ENCODE measurements at regions of chr14 and their contacts with region 1.

Region 1: DNA sequence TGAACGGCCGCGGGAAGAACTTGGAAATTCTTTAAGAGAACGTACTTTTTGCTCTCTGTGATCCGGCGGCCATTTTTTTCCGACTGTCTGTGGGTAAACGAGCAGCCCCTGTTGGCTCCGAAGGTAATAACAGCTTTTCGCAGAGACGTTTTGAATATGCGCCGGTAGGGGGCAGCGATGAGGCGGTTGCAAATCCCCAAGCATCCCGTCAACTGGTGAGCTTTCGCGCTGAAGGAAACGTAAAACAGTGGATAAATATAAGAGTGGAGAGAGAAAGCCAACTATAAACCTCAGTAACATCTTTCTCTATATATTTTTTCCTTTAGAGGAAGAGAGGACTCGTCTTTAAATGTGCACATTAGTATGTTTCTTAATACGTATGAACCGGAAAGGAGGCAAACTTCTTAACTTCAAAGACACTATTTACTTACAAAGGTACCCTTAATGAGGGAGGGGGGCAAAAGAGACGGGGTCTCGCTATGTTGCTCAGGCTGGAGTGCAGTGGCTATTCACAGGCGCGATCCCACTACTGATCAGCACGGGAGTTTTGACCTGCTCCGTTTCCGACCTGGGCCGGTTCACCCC is 9.6 kb upstream of the NEMF start:
- DNase-seq: peak; percentile 86
- ATAC-seq: peak; percentile 9
- H3K4me3 Mint-ChIP-seq: no peak overlapping the region
- H3K27ac Mint-ChIP-seq: no peak overlapping the region
- H3K4me1 Mint-ChIP-seq: peaks cover 22% of the 10 kb centered on the region
- H3K27me3 Mint-ChIP-seq: no peaks in the 10 kb centered on the region

Region 2: GRCh38 chr14:49767562-49768300 is 94.5 kb before region 1 on chr14 and contains the start of gene KLHDC2:
- POLR2A ChIA-PET with region 1: interaction called, 17 read pairs
- DNase-seq: peak; percentile 93
- ATAC-seq: peak; percentile 88
- H3K4me3 Mint-ChIP-seq: peak within 1 kb of the TSS; percentile 98
- H3K27ac Mint-ChIP-seq: peak within 1 kb of the TSS; percentile 100
- H3K4me1 Mint-ChIP-seq: peaks cover 26% of the 10 kb centered on the region
- H3K27me3 Mint-ChIP-seq: no peaks in the 10 kb centered on the region
- total RNA-seq, gene KLHDC2: 43.6 to 44.1 TPM

Region 3: GRCh38 chr14:49786315-49787110 is 75.7 kb before region 1 on chr14:
- POLR2A ChIA-PET with region 1: no interaction called
- DNase-seq: no peak
- ATAC-seq: no peak
- H3K4me3 Mint-ChIP-seq: no peak overlapping the region
- H3K27ac Mint-ChIP-seq: no peak overlapping the region
- H3K4me1 Mint-ChIP-seq: no peaks in the 10 kb centered on the region
- H3K27me3 Mint-ChIP-seq: no peaks in the 10 kb centered on the region

Region 4: GRCh38 chr14:49892636-49893308 is 30.6 kb after region 1 on chr14 and contains the start of gene ARF6:
- POLR2A ChIA-PET with region 1: interaction called, 53 read pairs
- DNase-seq: peak; percentile 98
- ATAC-seq: peak; percentile 89
- H3K4me3 Mint-ChIP-seq: peak within 1 kb of the TSS; percentile 99
- H3K27ac Mint-ChIP-seq: peak within 1 kb of the TSS; percentile 99
- H3K4me1 Mint-ChIP-seq: peaks cover 16% of the 10 kb centered on the region
- H3K27me3 Mint-ChIP-seq: no peaks in the 10 kb centered on the region
- total RNA-seq, gene ARF6: 162 to 169 TPM

Region 5: GRCh38 chr14:50038398-50039119 is 176.4 kb after region 1 on chr14:
- POLR2A ChIA-PET with region 1: interaction called, 35 read pairs
- DNase-seq: no peak
- ATAC-seq: peak; percentile 40
- H3K4me3 Mint-ChIP-seq: peak overlapping the region; percentile 54
- H3K27ac Mint-ChIP-seq: peak overlapping the region; percentile 98
- H3K4me1 Mint-ChIP-seq: peaks cover 53% of the 10 kb centered on the region
- H3K27me3 Mint-ChIP-seq: no peaks in the 10 kb centered on the region

Region 6: DNA sequence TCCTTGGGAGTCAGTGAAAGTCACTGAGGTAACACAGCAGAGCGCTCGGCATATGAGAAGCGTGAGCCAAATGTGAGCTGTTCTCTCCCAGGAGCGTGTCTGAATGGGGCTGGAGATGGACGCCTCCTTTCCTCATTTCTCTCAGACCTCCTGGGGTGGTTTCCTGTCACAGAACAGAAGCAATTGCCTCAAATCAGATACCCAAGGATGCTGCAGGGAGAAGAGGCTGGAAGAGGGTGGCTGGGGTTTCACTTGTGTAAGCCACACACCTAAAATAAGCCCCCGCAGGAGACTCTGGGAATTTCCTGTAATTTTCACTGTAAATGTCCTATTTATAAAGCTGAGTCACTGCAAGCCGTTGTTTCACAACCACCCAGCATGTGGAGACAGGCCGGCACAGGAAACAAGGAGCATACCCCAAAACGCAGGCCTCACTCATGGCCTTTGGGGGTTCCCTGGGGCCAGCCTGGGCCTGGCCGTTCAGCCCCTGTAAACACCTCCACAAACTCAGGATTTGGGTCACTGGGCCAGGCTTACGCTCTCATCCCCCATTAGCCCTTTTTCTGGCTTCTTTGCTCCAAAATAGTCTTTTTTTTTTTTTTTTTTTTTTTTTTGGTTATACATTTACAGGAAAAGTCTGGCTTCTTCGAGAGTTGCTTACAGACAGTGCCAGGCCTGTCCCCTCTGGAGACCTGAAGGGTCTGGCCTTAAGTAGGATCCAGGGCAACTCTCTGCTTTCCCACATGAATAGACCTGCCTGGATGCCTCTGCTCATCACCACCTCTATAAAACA is 198.9 kb after region 1 on chr14:
- POLR2A ChIA-PET with region 1: interaction called, 121 read pairs
- DNase-seq: peak; percentile 65
- ATAC-seq: peak; percentile 11
- H3K4me3 Mint-ChIP-seq: peak overlapping the region; percentile 99
- H3K27ac Mint-ChIP-seq: peak overlapping the region; percentile 100
- H3K4me1 Mint-ChIP-seq: peaks cover 76% of the 10 kb centered on the region
- H3K27me3 Mint-ChIP-seq: no peaks in the 10 kb centered on the region

Region 7: DNA sequence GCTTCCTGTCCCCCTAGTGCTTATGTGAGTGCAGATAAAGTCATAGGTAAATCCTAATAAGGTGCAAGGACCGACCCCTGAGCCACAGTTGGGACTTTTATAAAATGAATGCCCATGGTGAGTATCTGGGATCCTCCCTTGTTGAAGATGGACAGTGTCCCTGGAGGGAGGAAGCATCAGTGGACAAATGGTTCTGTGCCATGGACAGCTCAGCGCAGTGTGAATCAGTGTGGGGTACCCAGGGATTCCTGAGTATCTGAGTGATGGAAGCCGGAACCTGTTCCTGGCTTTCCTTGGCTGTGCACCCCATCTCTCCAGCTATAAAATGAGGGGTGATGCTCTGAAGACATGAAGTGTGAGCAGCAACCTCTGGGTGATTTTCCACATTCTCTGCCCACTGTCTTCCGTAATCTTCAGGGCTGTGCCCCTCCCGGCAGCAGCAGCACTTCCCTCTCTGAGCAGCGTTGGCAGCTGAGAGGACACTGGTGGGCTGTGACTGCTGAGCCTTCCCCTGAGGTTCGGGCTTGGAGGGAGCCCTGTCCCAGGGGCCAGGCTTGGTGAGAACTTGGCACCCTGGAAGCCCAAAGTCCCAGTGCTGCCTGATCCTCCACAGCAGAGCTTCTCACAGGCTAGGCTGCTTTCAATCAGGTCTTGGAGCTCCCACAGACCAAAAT is 229.2 kb after region 1 on chr14:
- POLR2A ChIA-PET with region 1: interaction called, 43 read pairs
- DNase-seq: no peak
- ATAC-seq: no peak
- H3K4me3 Mint-ChIP-seq: peak overlapping the region; percentile 17
- H3K27ac Mint-ChIP-seq: peak overlapping the region; percentile 77
- H3K4me1 Mint-ChIP-seq: peaks cover 71% of the 10 kb centered on the region
- H3K27me3 Mint-ChIP-seq: no peaks in the 10 kb centered on the region

Region 8: GRCh38 chr14:50116181-50116956 is 254.2 kb after region 1 on chr14 and contains the start of gene VCPKMT:
- POLR2A ChIA-PET with region 1: interaction called, 29 read pairs
- DNase-seq: peak; percentile 99
- ATAC-seq: peak; percentile 98
- H3K4me3 Mint-ChIP-seq: peak within 1 kb of the TSS; percentile 97
- H3K27ac Mint-ChIP-seq: peak within 1 kb of the TSS; percentile 99
- H3K4me1 Mint-ChIP-seq: peaks cover 25% of the 10 kb centered on the region
- H3K27me3 Mint-ChIP-seq: no peaks in the 10 kb centered on the region
- total RNA-seq, gene VCPKMT: 12.9 to 14.9 TPM

Measured in activated naive CD8-positive, alpha-beta T cell treated with anti-CD3 and anti-CD28 coated beads, Interleukin-2, amount 10 ng/mL, durations not matched to agents 7 days and 5 days (primary cell).